ENCODE measurements at regions of chr18 and their contacts with region 1.

Region 1: DNA sequence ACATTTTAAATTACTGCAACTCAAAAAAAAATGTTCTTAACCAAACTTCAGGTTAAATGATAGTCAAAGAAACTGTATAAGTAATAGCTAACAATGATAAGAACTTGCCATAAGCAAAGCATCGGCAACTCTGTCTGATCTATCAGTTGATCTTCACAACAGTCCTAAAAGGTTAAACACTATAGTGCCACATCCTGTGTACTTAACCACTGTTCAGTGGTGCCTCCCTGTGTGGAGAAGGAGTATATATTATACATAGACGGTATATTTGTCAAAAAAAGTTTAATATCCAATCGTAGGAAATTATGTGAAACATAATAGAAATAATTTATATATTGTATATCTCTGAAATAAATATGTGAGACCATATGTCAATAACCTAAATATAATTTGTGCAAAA is 13.0 kb downstream of the DTNA start:
- DNase-seq: peak in 1 of 2 donors; percentile 3
- ATAC-seq: peak; percentile 92 to 100 (median 95)
- H3K4me3 ChIP-seq: no peak overlapping the region
- H3K4me3 Mint-ChIP-seq: no peak overlapping the region
- H3K27ac ChIP-seq: no peak overlapping the region
- H3K27ac Mint-ChIP-seq: no peak overlapping the region
- H3K4me1 ChIP-seq: peaks cover 4% of the 10 kb centered on the region
- H3K4me1 Mint-ChIP-seq: peaks cover 7 to 12% of the 10 kb centered on the region in 2 donors
- H3K27me3 ChIP-seq: no peaks in the 10 kb centered on the region
- H3K27me3 Mint-ChIP-seq: peaks cover 15 to 27% of the 10 kb centered on the region in 2 donors
- CTCF ChIP-seq: peak; percentile 45

Region 2: GRCh38 chr18:34661464-34662111 is 61.6 kb before region 1 on chr18:
- intact Hi-C with region 1: loop called (anchors 1 kb)
- DNase-seq: peak in 1 of 2 donors; percentile 26
- ATAC-seq: peak; percentile 62 to 75 (median 64)
- H3K4me3 ChIP-seq: no peak overlapping the region
- H3K4me3 Mint-ChIP-seq: no peak overlapping the region
- H3K27ac ChIP-seq: no peak overlapping the region
- H3K27ac Mint-ChIP-seq: no peak overlapping the region
- H3K4me1 ChIP-seq: no peaks in the 10 kb centered on the region
- H3K4me1 Mint-ChIP-seq: peaks cover 6 to 7% of the 10 kb centered on the region in 2 donors
- H3K27me3 ChIP-seq: peaks cover 2% of the 10 kb centered on the region
- H3K27me3 Mint-ChIP-seq: peaks cover 30 to 35% of the 10 kb centered on the region in 2 donors
- CTCF ChIP-seq: peak; percentile 94

Region 3: GRCh38 chr18:34694591-34695165 is 28.5 kb before region 1 on chr18:
- intact Hi-C with region 1: loop called (anchors 1 kb)
- DNase-seq: no peak
- ATAC-seq: no peak
- H3K4me3 ChIP-seq: no peak overlapping the region
- H3K4me3 Mint-ChIP-seq: no peak overlapping the region
- H3K27ac ChIP-seq: no peak overlapping the region
- H3K27ac Mint-ChIP-seq: peak overlapping the region; percentile 5 to 29
- H3K4me1 ChIP-seq: peaks cover 8% of the 10 kb centered on the region
- H3K4me1 Mint-ChIP-seq: peaks cover 36 to 59% of the 10 kb centered on the region in 2 donors
- H3K27me3 ChIP-seq: no peaks in the 10 kb centered on the region
- H3K27me3 Mint-ChIP-seq: peaks cover 3 to 13% of the 10 kb centered on the region in 2 donors
- CTCF ChIP-seq: no peak

Measured in natural killer cell (primary cell).